Cardiac septum (tissue), 1 donor: ENCODE measurements at regions of chr11 and their contacts with region 1.

Region 1: GRCh38 chr11:84719935-84720577 is 907.1 kb downstream of the DLG2 start:
- DNase-seq: no peak

Region 2: GRCh38 chr11:84564180-84564866 is 155.7 kb before region 1 on chr11:
- intact Hi-C with region 1: loop called (anchors 5 kb)
- DNase-seq: no peak

Region 3: GRCh38 chr11:85062320-85063058 is 342.4 kb after region 1 on chr11:
- intact Hi-C with region 1: no loop called
- DNase-seq: no peak